Gastrocnemius medialis (tissue), 4 donors: ENCODE measurements at regions of chr16 and their contacts with region 1.

Region 1: DNA sequence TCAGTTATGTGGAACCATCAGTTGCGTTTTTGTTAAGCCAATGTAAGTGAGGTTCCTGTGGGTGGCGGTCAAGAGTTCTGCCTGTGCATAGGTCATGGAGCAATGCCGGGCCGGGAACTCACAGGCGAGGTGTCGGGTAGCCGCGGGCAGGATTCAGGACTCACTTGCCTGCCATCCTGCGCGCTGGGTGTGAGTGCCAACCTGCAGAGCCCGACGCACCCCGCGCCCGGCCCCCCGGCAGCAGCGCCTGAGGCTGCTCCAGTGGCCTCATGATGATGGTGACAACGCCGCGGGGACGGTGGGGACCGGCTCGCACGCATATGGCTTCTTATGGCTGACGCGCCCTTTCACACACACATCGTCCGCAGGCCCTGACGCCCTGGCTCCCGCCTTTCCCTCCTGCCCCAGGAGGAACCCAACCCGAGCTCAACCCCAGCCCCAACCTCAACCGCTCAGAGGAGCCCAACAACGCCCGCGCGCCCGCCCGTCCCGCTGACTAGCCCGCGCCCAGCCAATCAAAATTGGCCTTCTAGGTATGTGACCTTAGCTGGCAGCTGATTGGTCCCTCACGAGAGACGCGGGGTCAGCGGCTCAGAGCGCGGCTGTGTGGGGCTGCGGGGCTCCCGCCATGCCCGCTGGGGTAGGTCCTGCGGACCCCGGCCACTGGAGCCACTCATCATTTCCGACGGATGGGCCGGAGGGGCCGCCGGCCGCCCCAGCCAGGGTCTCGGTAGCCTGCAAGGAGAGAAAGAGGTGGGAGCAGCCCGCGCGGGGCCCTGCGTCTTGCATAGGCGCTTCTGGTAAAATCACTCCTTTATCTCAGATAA is at the start of gene C16orf95:
- DNase-seq: peak; percentile 96
- ATAC-seq: peak; percentile 95
- H3K4me3 ChIP-seq: peak within 1 kb of the TSS; percentile 83 to 100 (median 95)
- H3K27ac ChIP-seq: peak within 1 kb of the TSS; percentile 89 to 99 (median 93)
- H3K4me1 ChIP-seq: peaks cover 14 to 15% of the 10 kb centered on the region in 2 donors
- H3K27me3 ChIP-seq: no peaks in the 10 kb centered on the region
- CTCF ChIP-seq: peak; percentile 60 to 79 (median 77)
- POLR2A ChIP-seq: peak; percentile 93 to 95
- total RNA-seq, gene C16orf95: 0.22 to 3.8 (median 1.3) TPM

Region 2: GRCh38 chr16:87350681-87351319 is 33.7 kb after region 1 on chr16:
- in situ Hi-C with region 1: no loop called
- intact Hi-C with region 1: loop called (anchors 5 kb)
- DNase-seq: peak; percentile 68 to 78
- ATAC-seq: peak; percentile 84 to 93
- H3K4me3 ChIP-seq: no peak overlapping the region
- H3K27ac ChIP-seq: peak overlapping the region; percentile 76 to 85 (median 83)
- H3K4me1 ChIP-seq: peaks cover 32 to 33% of the 10 kb centered on the region in 2 donors
- H3K27me3 ChIP-seq: no peaks in the 10 kb centered on the region
- CTCF ChIP-seq: no peak
- POLR2A ChIP-seq: peak in 1 of 2 donors; percentile 13

Region 3: DNA sequence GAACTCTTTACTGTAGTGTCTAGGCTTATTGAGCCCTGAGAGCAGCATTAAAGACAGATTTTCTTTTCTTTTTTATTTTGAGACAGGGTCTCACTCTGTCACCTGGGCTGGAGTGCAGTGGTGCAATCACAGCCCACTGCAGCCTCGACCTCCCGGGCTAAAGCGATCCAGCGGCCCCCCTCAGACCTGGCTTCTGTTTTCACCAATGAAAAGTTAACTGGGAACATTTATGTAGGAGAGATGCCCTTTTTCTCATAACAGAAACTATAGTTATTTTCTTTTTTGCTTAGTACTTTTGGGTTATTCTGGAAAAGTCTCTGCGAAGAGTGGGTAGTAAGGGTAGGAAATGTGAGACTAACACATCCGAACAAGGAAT is 76.5 kb after region 1 on chr16:
- in situ Hi-C with region 1: loop called (anchors 5 to 10 kb)
- intact Hi-C with region 1: loop called (anchors 1 kb)
- DNase-seq: no peak
- ATAC-seq: no peak
- H3K4me3 ChIP-seq: peak overlapping the region; percentile 65 to 79 (median 76)
- H3K27ac ChIP-seq: peak overlapping the region; percentile 97 to 99 (median 98)
- H3K4me1 ChIP-seq: peaks cover 34 to 37% of the 10 kb centered on the region in 2 donors
- H3K27me3 ChIP-seq: no peaks in the 10 kb centered on the region
- CTCF ChIP-seq: no peak
- POLR2A ChIP-seq: no peak

Region 4: DNA sequence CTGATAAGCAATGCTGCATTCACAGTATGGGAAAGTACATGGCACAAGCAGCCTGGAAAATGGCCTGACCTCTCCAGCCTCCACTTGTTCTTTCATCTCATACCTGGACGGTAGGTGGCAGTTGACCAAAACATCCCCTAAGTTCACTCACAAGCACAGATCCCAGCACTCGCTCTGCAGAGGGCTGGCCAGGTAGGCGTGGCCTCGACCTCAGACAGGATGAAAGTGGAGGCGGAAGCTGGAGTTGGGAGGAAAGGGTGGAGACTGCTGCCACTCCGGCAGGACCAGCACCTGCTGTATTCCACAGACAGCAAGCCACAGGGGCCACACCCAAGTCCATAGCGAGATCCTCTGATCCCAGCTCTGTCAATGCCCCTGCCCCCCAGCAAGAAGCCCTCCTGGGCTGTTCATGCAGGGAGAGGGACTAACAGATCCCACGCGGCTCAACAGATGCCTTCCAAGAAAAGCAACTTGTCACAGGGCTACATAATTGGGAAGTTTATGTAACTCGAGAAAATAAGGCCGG is 144.4 kb after region 1 on chr16:
- in situ Hi-C with region 1: no loop called
- intact Hi-C with region 1: loop called (anchors 10 kb)
- DNase-seq: peak; percentile 26 to 44
- ATAC-seq: peak in 1 of 2 donors; percentile 19
- H3K4me3 ChIP-seq: no peak overlapping the region
- H3K27ac ChIP-seq: peak overlapping the region; percentile 4 to 58 (median 48)
- H3K4me1 ChIP-seq: peaks cover 47 to 64% of the 10 kb centered on the region in 2 donors
- H3K27me3 ChIP-seq: no peaks in the 10 kb centered on the region
- CTCF ChIP-seq: peak in 3 of 5 experiments; percentile 20 to 36 (median 33)
- POLR2A ChIP-seq: no peak

Region 5: GRCh38 chr16:87540945-87541877 is 224.1 kb after region 1 on chr16:
- in situ Hi-C with region 1: no loop called
- intact Hi-C with region 1: loop called (anchors 10 kb)
- DNase-seq: no peak
- ATAC-seq: no peak
- H3K4me3 ChIP-seq: peak overlapping the region in 2 of 4 donors; percentile 9 to 43
- H3K27ac ChIP-seq: peak overlapping the region in 3 of 4 donors; percentile 4 to 46 (median 28)
- H3K4me1 ChIP-seq: no peaks in the 10 kb centered on the region
- H3K27me3 ChIP-seq: peaks cover 18 to 43% (median 25%) of the 10 kb centered on the region in 3 donors
- CTCF ChIP-seq: no peak
- POLR2A ChIP-seq: no peak